Breast epithelium (tissue), 4 donors: ENCODE measurements at regions of chr14 and their contacts with region 1.

Region 1: GRCh38 chr14:21455911-21456667 is at the start of gene CHD8:
- DNase-seq: peak; percentile 99 to 100
- H3K4me3 ChIP-seq: peak within 1 kb of the TSS; percentile 71 to 87 (median 72)
- H3K27ac ChIP-seq: peak within 1 kb of the TSS; percentile 93 to 98
- H3K4me1 ChIP-seq: peaks cover 0 to 8% of the 10 kb centered on the region in 2 donors
- H3K27me3 ChIP-seq: no peaks in the 10 kb centered on the region
- CTCF ChIP-seq: peak; percentile 54 to 66 (median 58)
- POLR2A ChIP-seq: no peak
- total RNA-seq, gene CHD8: 53.8 to 81.4 (median 72.4) TPM

Region 2: DNA sequence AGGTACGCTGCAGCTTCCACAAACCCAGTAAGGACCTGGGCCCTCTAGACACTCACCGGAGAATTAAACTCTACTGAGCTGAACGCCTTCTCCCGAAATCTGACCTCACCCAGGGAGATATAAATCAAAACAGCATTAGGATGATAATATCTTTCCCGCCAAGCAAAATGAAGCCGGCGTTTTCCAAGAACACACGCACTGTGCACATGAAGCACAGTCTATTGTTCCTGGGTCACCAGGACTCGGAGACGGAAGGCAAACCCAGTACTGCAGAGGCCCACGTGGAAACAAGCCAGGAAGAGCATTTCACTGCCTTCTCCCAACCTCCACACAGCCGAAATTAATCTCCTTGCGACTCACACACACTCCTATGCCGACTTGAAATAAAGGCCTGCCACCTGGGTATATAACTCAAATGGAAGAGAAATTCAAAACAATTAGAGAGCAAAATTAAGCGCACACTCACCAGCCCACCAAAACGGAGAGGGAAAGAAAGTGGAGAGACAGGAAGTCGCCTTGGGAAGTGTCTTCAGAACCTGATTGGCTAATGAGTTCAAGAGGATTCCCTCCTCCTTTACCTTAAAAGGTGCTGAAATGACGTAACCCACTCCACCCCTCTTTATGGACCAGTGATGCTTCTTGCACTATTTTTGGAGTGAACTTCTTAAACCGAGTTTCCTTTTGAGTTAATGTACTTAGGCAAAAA is 1123.1 kb before region 1 on chr14 and contains the start of gene CCNB1IP1:
- intact Hi-C with region 1: loop called (anchors 10 kb)
- DNase-seq: peak in 1 of 2 donors; percentile 68
- H3K4me3 ChIP-seq: peak within 1 kb of the TSS; percentile 47 to 70 (median 63)
- H3K27ac ChIP-seq: peak within 1 kb of the TSS; percentile 83 to 91
- H3K4me1 ChIP-seq: no peaks in the 10 kb centered on the region
- H3K27me3 ChIP-seq: no peaks in the 10 kb centered on the region
- CTCF ChIP-seq: no peak
- POLR2A ChIP-seq: no peak
- total RNA-seq, gene CCNB1IP1: 65.8 to 78.3 (median 65.9) TPM

Region 3: GRCh38 chr14:21626491-21627230 is 170.6 kb after region 1 on chr14:
- intact Hi-C with region 1: no loop called
- DNase-seq: no peak
- H3K4me3 ChIP-seq: no peak overlapping the region
- H3K27ac ChIP-seq: no peak overlapping the region
- H3K4me1 ChIP-seq: no peaks in the 10 kb centered on the region
- H3K27me3 ChIP-seq: no peaks in the 10 kb centered on the region
- CTCF ChIP-seq: no peak
- POLR2A ChIP-seq: no peak